Activated naive CD4-positive, alpha-beta T cell treated with anti-CD3 and anti-CD28 coated beads for 36 hours (primary cell): ENCODE measurements at regions of chr3 and their contacts with region 1.

Region 1: GRCh38 chr3:123489400-123490004 is 40.6 kb upstream of the ADCY5 start:
- DNase-seq: peak; percentile 70
- H3K4me3 Mint-ChIP-seq: no peak overlapping the region
- H3K27ac Mint-ChIP-seq: no peak overlapping the region
- H3K4me1 Mint-ChIP-seq: no peaks in the 10 kb centered on the region
- H3K27me3 Mint-ChIP-seq: no peaks in the 10 kb centered on the region

Region 2: DNA sequence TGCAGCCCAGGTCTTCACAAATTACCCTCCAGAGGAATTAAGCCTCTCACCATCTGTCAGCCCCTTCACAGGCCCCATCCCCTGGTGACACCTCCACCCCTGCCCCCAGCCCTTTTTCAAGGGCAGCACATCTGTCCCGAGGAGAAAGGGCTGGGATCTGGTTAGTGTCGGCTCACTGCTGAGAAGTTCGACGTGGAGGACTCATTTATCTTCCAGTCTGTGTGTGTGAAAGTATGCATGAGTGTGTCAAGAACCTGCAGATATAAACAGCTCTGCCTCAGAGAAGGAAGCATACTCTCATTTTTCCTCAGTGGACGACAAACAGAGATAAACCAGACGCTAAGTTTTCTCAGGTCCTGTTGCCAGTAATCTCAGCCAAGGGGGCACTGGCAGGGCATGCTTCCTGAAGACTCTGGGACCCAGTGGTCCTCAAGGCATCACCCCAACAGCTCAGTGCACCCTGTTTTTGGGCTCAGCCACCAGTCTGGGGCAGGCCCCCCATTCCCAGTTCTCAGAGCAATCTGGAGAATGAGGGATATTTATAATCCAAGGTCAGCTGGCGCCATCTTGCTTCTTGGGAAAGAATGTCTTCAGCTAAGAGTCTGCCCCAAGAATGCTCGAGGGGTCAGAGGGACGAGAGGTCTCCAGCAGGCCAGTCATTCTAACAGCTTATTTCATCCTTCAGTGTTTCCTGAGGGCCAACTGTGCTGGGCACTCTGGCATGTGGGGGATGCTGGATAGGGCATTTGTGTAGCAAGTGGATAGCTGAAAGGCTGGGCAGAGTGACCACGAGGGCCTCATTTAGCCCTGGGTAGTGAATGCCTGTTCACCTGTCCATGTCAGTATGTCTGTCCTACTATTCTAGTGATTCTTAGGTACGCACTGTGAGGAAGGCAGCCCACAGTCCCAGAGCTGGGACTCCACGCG is 114.2 kb before region 1 on chr3:
- CTCF ChIA-PET with region 1: no interaction called
- intact Hi-C with region 1: no loop called
- DNase-seq: no peak
- H3K4me3 Mint-ChIP-seq: no peak overlapping the region
- H3K27ac Mint-ChIP-seq: no peak overlapping the region
- H3K4me1 Mint-ChIP-seq: no peaks in the 10 kb centered on the region
- H3K27me3 Mint-ChIP-seq: no peaks in the 10 kb centered on the region

Region 3: DNA sequence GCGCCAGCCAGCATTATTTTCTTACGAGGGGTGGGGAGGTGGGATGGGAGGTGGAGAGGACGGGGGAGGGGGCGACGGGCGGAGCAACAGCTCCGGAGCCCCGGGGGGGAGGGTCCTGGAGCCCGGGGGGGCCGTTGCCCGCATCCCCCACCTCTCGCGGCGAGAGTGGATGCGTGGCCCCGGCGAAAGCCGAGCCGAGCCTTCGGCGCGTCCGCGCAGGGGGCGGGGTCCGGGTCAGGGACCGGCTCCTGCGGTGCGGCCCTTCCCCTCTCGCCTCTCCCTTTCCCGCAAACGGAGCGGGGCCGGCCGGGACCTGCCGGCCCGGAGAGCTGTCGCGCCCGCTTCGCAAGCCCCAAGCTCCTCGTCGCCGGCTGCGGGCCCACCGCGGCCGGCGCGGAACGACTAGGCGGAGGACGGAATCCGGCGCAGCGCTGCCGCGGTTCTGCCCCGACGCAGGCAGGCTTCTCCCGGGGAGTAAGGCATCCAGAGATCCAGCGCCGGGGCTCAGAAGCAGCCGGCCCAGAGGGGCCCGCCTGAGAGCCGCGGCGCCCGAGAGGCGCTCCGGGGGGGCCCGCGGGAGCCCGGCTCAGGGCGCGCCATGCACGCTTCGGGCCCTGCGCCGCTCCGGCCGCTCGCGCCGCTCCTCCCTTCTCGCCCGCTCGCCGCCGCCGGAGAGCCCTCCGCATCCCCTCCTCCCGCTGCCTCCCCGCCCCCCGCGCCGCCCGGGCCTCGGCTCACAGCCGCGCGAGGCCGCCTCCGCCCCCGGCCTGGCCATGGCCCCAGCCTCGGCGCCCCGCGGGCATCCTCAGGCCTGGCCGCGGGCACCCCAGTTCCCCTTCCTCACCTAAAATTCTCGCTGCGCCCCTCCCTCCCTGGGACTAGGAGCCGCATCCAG is 40.2 kb before region 1 on chr3:
- CTCF ChIA-PET with region 1: interaction called, 5 read pairs
- intact Hi-C with region 1: loop called (anchors 2 kb)
- DNase-seq: no peak
- H3K4me3 Mint-ChIP-seq: no peak overlapping the region
- H3K27ac Mint-ChIP-seq: no peak overlapping the region
- H3K4me1 Mint-ChIP-seq: peaks cover 2% of the 10 kb centered on the region
- H3K27me3 Mint-ChIP-seq: peaks cover 49% of the 10 kb centered on the region